AG04450 (cell line): ENCODE measurements at regions of chr4 and their contacts with region 1.

Region 1: DNA sequence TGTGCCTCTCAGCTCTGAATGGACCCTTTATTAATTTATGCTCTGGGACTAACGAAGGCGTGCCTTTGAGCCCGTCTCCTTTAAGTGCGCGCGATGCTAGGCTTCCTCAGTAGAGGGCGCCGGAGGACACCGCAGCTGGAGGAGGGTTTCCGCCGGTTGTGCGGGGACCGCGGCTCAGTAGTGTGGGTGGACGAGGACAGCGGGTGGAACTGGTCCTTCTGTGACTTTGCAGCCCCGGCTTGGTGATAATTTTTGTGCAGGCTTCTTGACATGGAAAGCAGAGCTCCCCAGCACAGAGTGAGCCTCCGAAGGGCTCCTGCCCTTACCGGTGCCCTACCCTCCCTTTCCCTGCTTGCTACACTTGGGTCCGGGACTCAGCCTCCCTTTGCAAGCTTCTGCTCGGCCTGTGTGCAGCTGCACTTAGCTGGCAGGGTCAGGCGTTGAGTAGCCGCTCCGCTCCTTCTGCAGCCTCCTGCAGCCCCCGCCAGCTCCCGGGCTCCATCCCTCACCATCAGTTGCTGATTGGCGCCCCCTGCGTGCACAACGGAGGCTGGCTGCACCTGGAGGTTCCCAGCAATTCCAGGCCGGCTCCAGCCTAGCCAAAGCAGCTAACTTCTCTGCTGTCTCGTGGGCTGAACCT is 26.8 kb upstream of the BOD1L1 start:
- DNase-seq: no peak
- H3K4me3 ChIP-seq: peak overlapping the region; percentile 70
- H3K27ac ChIP-seq: no peak overlapping the region
- H3K27me3 ChIP-seq: no peaks in the 10 kb centered on the region
- CTCF ChIP-seq: peak; percentile 96

Region 2: GRCh38 chr4:13461191-13461905 is 192.9 kb before region 1 on chr4:
- CTCF ChIA-PET with region 1: no interaction called
- POLR2A ChIA-PET with region 1: no interaction called
- DNase-seq: no peak
- H3K4me3 ChIP-seq: no peak overlapping the region
- H3K27ac ChIP-seq: no peak overlapping the region
- H3K27me3 ChIP-seq: no peaks in the 10 kb centered on the region
- CTCF ChIP-seq: no peak

Region 3: DNA sequence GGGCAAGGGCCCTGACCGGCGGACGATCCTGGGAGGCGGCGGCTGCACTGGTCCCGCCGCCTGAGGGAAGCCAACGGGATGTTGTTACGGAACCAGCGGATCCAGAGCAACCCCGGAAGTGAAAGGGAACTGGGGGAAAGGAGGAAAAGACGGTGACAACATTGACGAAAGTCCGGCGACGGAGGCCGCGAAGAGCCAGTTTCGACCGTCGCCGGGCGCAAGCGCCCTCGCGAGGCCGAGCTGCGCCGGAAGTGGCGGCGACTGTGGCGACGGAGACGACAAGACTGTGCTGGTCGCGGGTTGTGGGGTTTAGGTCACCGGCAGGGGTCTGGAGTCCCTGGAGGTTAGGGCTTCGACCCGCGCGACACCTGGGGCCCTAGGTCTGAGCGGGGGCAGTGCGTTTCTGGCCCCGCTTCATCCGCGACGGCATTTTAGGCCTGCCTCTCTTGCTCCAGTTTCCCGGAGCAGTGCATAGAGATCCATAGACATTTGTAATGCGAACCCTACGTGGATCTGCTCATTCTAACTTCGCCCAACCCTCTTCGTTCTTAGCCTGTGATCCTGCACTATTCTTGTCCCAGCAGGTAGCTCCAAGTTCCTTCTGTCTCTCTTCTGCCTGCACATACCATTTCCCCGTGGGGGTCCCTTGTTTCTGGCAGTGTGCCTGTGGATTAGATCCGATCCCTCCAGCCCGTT is 26.5 kb before region 1 on chr4 and contains the start of gene BOD1L1:
- CTCF ChIA-PET with region 1: interaction called, 12 read pairs
- POLR2A ChIA-PET with region 1: interaction called, 4 read pairs
- DNase-seq: peak; percentile 63
- H3K4me3 ChIP-seq: peak within 1 kb of the TSS; percentile 99
- H3K27ac ChIP-seq: peak within 1 kb of the TSS; percentile 78
- H3K27me3 ChIP-seq: no peaks in the 10 kb centered on the region
- CTCF ChIP-seq: peak; percentile 63
- polyA plus RNA-seq, gene BOD1L1: 17.9 and 23.1 TPM in 2 replicates

Region 4: DNA sequence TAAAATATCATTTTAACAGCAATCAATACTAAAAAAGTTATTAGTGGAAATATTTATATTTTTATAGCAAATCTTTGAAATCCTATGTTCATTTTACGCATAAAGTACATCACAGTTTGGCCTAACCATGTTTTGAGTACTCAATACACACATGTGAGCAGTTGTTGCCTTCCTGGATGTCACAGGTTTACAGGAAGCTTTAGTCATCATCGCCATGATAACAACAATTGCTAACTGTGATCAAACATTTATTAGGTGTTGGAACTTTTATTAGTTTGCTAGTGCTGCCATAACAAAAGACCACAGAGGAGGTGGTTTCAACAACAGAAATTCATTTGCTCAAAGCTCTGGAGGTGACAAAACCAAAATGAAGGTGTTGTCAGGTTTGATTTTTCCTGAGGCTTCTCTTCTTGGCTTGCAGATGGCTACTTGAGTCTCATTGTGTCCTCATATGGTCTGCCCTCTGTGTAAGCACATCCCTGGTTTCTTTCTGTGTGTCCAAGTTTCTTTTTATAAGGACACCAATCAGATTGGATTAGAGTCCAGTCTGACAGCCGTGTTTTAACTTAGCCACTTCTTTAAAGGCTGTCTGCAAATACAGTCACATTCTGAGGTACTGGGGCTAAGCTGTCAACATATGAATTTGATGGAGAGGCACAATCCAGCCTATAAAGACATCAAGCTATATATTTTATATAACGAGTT is 16.3 kb after region 1 on chr4:
- CTCF ChIA-PET with region 1: interaction called, 22 read pairs
- POLR2A ChIA-PET with region 1: no interaction called
- DNase-seq: no peak
- H3K4me3 ChIP-seq: no peak overlapping the region
- H3K27ac ChIP-seq: no peak overlapping the region
- H3K27me3 ChIP-seq: no peaks in the 10 kb centered on the region
- CTCF ChIP-seq: no peak

Region 5: GRCh38 chr4:13918110-13918509 is 263.8 kb after region 1 on chr4:
- CTCF ChIA-PET with region 1: interaction called, 10 read pairs
- POLR2A ChIA-PET with region 1: no interaction called
- DNase-seq: peak; percentile 97
- H3K4me3 ChIP-seq: no peak overlapping the region
- H3K27ac ChIP-seq: peak overlapping the region; percentile 96
- H3K27me3 ChIP-seq: no peaks in the 10 kb centered on the region
- CTCF ChIP-seq: no peak

Region 6: GRCh38 chr4:15001869-15002658 is 1347.8 kb after region 1 on chr4 and contains the start of gene CPEB2:
- CTCF ChIA-PET with region 1: interaction called, 11 read pairs
- POLR2A ChIA-PET with region 1: no interaction called
- DNase-seq: peak; percentile 82
- H3K4me3 ChIP-seq: peak within 1 kb of the TSS; percentile 85
- H3K27ac ChIP-seq: peak within 1 kb of the TSS; percentile 98
- H3K27me3 ChIP-seq: no peaks in the 10 kb centered on the region
- CTCF ChIP-seq: no peak
- polyA plus RNA-seq, gene CPEB2: 10.4 and 11.4 TPM in 2 replicates